ENCODE measurements at regions of chr10 and their contacts with region 1.

Region 1: GRCh38 chr10:129953119-129954051 is 10.7 kb downstream of the EBF3 start:
- DNase-seq: peak; percentile 70

Region 2: GRCh38 chr10:129892548-129893052 is 60.8 kb before region 1 on chr10:
- intact Hi-C with region 1: loop called (anchors 2 kb)
- DNase-seq: no peak

Region 3: DNA sequence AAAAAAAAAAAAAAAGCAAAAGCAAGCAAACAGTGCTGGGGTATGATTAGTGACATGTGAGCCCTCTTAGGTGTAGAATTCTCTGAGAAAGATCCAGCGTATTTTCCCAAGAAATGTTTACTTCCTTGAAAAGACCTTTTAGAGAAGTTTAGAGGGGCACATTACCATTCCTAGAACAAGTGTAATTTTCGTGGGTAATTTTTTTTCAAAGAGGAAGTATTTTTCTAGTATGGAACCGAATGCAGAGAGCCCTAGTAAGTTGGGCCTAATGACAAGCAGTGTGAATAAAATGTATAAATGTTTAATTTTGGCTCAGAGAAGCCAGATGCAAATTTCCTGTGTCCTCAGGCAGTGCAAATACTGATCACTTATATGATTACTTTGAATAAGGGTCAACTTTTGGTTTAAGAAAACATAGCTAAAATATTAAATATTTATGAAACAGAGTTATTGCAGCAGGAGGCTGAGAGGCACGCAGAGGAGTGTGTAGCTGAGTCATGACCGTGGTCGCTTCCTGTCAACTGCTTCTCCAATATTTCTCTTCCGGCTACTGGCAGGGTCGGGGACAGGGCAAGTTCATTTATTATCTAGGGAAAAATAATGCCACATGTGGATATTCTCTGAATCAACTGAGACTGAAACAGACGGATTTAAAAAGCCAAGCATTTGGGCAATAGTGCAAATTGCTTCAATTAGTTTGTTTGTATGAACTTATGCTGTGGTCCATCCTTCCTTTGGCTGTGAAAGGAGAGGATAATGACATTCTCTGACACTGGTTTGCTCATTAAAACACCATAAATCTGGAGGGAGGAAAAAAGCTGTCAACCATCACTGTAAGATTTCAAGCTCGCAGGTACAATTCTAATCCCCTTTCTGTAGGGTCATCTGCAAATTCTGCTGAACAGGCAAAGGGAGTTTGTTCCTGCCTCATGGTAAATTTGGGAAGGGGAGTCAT is 678.0 kb after region 1 on chr10:
- intact Hi-C with region 1: no loop called
- DNase-seq: no peak